Activated CD8-positive, alpha-beta T cell treated with anti-CD3 and anti-CD28 coated beads for 36 hours (primary cell): ENCODE measurements at regions of chr2 and their contacts with region 1.

Region 1: DNA sequence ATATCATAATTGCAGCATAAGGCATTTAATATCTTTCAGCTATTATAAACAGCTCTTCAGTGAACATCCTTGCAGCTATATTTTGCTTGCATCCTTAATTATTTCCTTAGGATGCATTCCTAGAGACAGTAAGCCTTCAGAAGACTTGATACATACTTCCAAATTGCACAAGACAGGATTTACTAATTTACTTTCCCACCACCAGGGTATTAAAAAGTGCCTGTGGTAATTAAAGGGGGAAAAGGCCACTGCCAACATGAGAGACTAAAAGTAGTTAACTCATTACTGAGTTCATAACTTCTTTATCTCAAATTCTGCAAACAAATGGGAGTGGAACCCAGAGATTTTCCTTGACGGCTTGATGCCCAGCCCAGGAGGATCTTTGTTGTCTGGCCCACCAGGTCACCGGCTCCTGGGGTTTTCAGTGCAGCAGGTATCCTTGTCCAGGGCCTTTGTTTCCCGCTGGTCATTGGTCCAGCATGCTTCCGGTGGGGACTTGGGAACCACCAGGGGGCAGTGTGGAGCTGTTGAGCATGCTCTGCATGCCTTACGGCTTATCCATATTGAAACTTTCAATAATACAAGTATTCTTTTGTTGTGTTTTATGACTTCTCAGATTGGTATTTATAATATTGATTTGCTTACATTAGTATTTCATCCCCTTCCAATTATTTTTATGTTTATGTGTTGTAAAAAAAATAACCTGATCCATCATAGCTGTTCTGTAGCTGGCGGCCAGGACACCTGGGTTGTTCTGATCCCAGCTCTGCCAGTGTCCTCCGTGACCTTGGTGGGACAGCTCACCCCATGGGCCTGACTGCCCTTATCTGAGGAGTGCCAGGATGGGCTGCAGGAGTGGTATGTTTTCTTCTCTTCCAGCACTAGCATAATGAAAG is 61.4 kb downstream of the TGOLN2 start:
- DNase-seq: peak; percentile 86
- ATAC-seq: peak; percentile 87
- H3K4me3 Mint-ChIP-seq: no peak overlapping the region
- H3K27ac Mint-ChIP-seq: no peak overlapping the region
- H3K4me1 Mint-ChIP-seq: no peaks in the 10 kb centered on the region
- H3K27me3 Mint-ChIP-seq: no peaks in the 10 kb centered on the region
- CTCF ChIP-seq: peak; percentile 96

Region 2: GRCh38 chr2:85248773-85249509 is 17.5 kb before region 1 on chr2:
- CTCF ChIA-PET with region 1: interaction called, 12 read pairs
- POLR2A ChIA-PET with region 1: no interaction called
- intact Hi-C with region 1: no loop called
- DNase-seq: no peak
- ATAC-seq: no peak
- H3K4me3 Mint-ChIP-seq: no peak overlapping the region
- H3K27ac Mint-ChIP-seq: no peak overlapping the region
- H3K4me1 Mint-ChIP-seq: peaks cover 7% of the 10 kb centered on the region
- H3K27me3 Mint-ChIP-seq: peaks cover 2% of the 10 kb centered on the region
- CTCF ChIP-seq: no peak

Region 3: DNA sequence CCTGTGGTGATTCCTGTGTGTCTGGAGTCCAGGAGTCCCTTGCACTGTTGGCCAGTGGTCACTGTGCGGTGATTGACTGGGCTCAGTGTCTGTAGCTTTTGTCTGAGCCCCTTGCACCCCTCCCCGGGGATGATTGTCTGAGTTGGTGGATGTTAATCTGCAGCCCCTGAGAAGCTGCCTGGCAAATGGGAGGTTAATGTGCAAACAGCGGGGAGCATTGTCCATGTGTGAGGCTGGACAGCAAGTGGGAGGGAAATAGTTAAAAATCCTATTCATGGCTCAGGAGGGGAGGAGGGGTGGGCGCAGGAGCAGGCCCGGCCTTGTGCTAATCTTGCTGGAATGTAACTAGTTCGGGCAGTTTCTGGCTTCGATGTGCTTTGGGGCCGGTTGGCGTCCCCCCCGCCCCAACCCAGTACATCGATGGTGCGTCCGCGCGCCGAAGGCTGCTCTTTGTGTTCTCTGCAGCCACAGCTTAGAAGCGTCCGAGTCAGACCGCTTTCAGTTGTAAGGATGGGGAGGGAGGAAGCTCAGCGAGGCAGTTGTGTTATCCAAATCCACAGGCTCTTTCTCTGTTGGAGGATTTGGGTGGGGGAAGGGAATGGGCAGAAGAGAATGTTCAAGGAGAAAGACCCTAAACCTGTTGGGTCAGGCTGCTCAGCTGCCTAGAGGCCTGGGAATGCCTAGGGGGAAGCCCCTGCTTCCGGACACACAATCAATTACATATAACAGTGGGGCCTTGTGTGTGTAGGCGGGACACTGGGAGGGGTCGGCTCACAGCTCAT is 10.4 kb before region 1 on chr2:
- CTCF ChIA-PET with region 1: interaction called, 13 read pairs
- POLR2A ChIA-PET with region 1: no interaction called
- intact Hi-C with region 1: no loop called
- DNase-seq: no peak
- ATAC-seq: no peak
- H3K4me3 Mint-ChIP-seq: no peak overlapping the region
- H3K27ac Mint-ChIP-seq: no peak overlapping the region
- H3K4me1 Mint-ChIP-seq: peaks cover 3% of the 10 kb centered on the region
- H3K27me3 Mint-ChIP-seq: no peaks in the 10 kb centered on the region
- CTCF ChIP-seq: no peak

Region 4: DNA sequence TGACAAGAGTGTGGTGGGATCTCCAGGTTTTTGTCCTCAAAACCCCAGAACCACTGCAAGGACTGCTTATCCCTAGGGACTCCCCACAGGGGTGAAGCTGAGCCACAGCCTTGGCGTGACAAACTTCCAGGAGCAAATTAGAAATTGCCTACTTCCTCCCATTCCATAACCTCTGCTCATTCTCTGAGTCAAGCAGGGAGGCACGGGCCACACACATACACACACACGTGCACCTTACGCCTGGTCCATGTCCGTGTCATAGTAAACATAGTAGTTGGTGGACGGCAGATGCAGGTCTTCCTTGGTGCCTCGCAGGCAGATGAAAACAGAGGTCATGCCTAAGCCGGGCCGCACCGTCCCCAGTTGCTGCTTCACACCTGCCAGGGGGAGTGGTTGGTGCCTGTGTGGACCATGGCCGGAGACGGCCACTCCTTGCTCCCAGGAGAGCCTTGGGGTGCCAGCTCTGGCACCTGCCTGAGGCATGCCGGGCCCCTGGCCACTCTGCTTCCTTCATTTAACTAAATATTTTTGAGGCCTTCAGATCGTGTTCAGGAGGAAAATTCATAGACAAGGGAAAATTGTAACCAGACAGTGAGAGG is 78.1 kb after region 1 on chr2:
- CTCF ChIA-PET with region 1: no interaction called
- POLR2A ChIA-PET with region 1: no interaction called
- intact Hi-C with region 1: no loop called
- DNase-seq: no peak
- ATAC-seq: no peak
- H3K4me3 Mint-ChIP-seq: no peak overlapping the region
- H3K27ac Mint-ChIP-seq: no peak overlapping the region
- H3K4me1 Mint-ChIP-seq: no peaks in the 10 kb centered on the region
- H3K27me3 Mint-ChIP-seq: no peaks in the 10 kb centered on the region
- CTCF ChIP-seq: no peak

Region 5: GRCh38 chr2:85354286-85355072 is 88.1 kb after region 1 on chr2 and contains the starts of genes ELMOD3 and RETSAT:
- CTCF ChIA-PET with region 1: no interaction called
- POLR2A ChIA-PET with region 1: no interaction called
- intact Hi-C with region 1: no loop called
- DNase-seq: peak; percentile 99
- ATAC-seq: peak; percentile 99
- H3K4me3 Mint-ChIP-seq: peak within 1 kb of the TSS; percentile 95
- H3K27ac Mint-ChIP-seq: peak within 1 kb of the TSS; percentile 94
- H3K4me1 Mint-ChIP-seq: peaks cover 38% of the 10 kb centered on the region
- H3K27me3 Mint-ChIP-seq: no peaks in the 10 kb centered on the region
- CTCF ChIP-seq: no peak
- total RNA-seq, gene ELMOD3: 11.8 to 13.0 TPM
- total RNA-seq, gene RETSAT: 21.3 to 22.9 TPM

Region 6: GRCh38 chr2:85409845-85410583 is 143.6 kb after region 1 on chr2 and contains the start of gene CAPG:
- CTCF ChIA-PET with region 1: no interaction called
- POLR2A ChIA-PET with region 1: no interaction called
- intact Hi-C with region 1: no loop called
- DNase-seq: peak; percentile 61
- ATAC-seq: peak; percentile 21
- H3K4me3 Mint-ChIP-seq: peak within 1 kb of the TSS; percentile 45
- H3K27ac Mint-ChIP-seq: no peak within 1 kb of the TSS
- H3K4me1 Mint-ChIP-seq: peaks cover 49% of the 10 kb centered on the region
- H3K27me3 Mint-ChIP-seq: no peaks in the 10 kb centered on the region
- CTCF ChIP-seq: no peak
- total RNA-seq, gene CAPG: 18.7 to 19.3 TPM